Right ventricle myocardium superior (tissue), 1 donor: ENCODE measurements at regions of chr4 and their contacts with region 1.

Region 1: DNA sequence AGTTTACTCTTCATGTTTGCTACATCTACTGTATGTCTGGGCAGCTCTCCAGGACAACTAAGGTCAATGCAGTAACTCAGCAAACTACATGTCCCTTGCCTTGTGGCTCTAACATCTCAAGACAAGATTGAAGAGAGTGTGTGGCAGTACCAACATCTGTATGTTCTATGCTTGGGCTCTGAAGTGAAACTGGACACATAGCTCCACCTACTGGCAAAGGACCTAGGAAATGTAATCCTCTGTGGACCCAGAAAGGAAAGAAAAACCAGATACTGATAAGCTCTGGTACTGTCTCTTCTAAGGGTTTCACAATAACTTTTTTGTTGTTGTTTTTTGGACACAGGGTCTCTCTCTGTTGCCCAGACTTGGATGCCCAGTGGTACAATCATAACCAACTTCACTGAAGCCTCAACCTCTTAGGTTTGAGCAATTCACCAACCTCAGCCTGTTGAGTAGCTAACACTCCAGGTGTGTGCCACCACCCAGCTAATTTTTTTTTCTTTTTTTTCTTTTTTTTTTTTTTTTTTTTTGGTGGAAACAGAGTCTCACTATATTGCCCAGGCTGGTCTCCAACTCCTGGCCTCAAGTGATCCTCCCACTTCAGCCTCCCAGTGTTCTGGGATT is 64.1 kb downstream of the QDPR start:
- DNase-seq: no peak
- ATAC-seq: peak; percentile 96

Region 2: DNA sequence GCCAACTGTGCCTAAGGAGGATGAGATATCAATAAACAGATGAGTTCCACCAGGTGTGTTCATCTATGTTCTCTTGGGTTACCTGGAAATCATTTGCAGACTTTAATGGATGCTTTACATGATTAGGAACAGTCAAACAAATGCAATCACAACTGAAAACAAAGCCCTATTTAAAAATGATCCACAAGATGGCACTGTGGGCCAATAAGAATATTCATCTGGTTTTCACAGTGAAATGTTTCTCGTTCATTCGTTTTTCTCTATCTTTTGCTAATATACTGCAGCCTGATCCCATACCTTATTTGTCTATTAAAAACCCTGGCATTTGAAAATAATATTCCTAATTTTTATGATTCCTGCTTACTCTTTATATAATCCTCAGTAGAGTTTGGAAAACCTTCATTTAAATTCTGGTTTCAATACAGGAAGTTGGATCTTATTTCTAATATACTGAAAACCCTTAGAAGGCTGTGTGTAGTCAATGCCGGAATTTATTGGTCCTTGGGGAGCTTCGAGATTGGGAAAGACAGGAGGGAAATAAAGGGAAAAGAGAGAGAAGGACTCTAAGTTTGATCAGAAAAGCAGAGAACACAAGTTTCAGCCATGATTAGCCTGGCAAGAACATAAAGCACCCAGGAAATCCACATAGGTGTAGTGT is 1157.8 kb before region 1 on chr4:
- intact Hi-C with region 1: loop called (anchors 10 kb)
- DNase-seq: no peak
- ATAC-seq: peak; percentile 58

Region 3: DNA sequence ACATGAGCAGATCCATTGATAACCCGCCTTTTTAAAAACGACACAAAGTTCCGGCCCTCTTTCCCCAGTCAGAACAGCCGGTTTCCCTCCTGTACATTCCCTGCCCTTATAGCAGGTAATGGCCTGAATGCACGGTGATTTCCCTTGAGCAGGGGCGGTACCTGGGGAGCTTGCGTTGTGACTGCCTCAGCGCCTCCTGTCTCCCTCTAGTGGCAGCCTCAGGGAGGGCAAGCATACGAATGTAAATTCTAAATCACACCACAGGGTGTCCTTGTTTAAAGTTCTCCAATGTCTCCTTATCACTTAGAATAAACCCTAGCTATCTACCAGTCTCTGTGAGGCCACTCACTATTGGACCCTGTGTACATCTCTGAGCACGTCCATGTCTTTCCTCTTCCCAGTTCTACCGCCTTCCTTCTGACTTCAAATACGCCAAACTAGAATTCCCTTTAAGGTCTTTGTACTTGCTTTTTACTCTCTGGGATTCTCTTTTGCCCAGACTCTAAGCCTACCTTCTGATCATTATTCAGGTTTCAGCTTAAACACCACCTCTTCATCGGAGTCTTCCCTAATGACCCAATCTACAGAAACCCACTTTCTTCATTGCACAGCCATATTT is 531.0 kb before region 1 on chr4:
- intact Hi-C with region 1: loop called (anchors 10 kb)
- DNase-seq: peak; percentile 53
- ATAC-seq: peak; percentile 49

Region 4: GRCh38 chr4:17273047-17273446 is 174.7 kb before region 1 on chr4:
- intact Hi-C with region 1: no loop called
- DNase-seq: no peak
- ATAC-seq: peak; percentile 55

Region 5: DNA sequence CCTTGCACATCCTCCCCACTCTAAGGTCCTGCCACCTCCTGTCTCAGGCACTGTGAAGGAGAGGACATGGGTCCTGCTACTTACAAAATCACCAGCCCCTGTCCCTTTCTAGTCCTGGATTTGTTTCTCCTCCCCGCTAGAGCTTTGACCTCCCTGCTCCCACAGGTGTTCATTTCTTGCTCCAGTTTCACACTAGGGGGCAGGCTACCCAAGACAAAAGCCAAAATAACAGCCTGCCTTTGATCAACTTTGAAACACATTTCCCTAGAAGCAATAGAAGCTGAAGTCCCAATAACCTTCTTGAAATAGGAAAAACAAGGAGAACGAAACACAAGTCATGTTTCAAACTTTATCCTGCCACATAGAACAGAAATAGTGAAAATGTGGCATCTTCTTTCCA is 100.3 kb before region 1 on chr4:
- intact Hi-C with region 1: loop called (anchors 10 kb)
- DNase-seq: no peak
- ATAC-seq: no peak

Region 6: GRCh38 chr4:17427991-17428390 is 19.8 kb before region 1 on chr4:
- intact Hi-C with region 1: no loop called
- DNase-seq: no peak
- ATAC-seq: no peak